Gastrocnemius medialis (tissue), 4 donors: ENCODE measurements at regions of chr16 and their contacts with region 1.

Region 1: DNA sequence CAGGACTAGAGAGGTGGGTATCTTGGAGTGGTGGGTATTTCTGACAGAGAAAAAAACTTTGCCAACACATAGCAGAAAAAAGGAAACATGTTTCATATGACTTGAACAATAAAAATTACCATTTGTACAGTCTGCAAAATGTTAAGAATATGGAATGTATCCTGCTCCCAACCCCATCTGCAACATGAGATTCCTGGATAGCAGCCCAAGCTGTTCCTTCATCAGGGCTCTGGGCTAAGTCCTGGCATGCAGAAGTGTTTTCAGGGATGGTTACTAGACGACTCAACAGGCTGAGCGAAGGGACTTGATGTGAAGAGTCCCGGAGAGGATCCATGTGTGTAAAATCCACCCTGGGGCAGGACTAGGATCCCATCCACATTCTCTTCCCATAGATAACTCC is 121.0 kb upstream of the IRX3 start:
- DNase-seq: no peak
- ATAC-seq: no peak
- H3K4me3 ChIP-seq: no peak overlapping the region
- H3K27ac ChIP-seq: no peak overlapping the region
- H3K4me1 ChIP-seq: peaks cover 3 to 6% of the 10 kb centered on the region in 2 donors
- H3K27me3 ChIP-seq: no peaks in the 10 kb centered on the region
- CTCF ChIP-seq: no peak
- POLR2A ChIP-seq: no peak

Region 2: DNA sequence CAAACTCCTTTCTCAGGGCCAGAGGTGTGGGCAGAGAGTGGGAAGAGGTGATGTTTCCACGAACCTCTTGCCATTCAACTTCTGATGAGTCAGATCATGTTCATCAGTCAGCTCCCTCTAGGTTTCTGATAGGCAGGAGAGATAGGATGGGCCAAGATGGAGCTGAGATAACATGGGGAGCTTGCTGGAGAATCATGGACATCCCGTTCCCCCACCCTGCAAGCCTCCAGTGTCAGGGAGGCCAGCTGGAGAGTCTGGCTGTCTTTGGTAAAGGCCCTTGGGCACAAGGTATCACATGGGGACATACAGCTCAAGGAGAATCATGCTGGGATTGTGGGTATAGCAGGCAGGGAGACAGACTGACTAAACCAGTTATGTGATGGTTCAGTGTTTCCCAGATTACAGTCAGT is 15.0 kb after region 1 on chr16:
- in situ Hi-C with region 1: no loop called
- intact Hi-C with region 1: no loop called
- DNase-seq: no peak
- ATAC-seq: no peak
- H3K4me3 ChIP-seq: no peak overlapping the region
- H3K27ac ChIP-seq: no peak overlapping the region
- H3K4me1 ChIP-seq: no peaks in the 10 kb centered on the region
- H3K27me3 ChIP-seq: no peaks in the 10 kb centered on the region
- CTCF ChIP-seq: no peak
- POLR2A ChIP-seq: no peak

Region 3: DNA sequence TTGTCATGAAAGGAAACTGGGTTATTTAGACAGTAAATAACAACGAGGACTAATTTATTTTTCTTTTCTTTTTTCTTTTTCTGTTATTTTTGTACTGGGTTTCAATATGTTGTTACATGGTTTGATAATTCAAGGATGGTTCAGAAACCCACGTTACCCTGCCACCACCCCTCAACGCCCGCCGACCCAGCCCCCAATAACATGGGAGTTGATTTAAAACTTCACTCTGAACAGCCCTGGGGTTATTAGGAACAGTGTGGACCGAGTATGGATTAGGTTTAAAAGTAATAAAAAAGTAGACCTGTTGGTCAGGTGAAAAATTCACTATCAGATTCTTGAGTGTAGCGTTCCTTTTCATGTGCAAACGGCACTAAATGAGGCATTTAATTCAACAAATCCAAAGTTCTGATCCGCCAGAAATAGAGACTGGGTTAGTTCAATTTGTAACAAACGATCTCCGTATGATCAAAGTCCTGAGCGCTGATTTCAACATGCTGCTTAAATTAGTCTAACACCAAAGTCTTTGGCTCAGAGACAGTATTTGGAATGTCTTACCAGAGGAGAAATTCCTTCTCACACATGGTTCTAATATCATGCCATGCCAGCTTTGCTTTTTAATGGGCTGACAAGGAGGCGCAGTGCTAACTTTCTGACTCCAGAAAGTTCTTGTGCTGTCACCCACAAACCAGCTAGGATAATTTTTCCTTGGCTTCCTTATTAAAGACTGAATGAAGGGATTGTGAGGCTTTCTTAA is 52.1 kb after region 1 on chr16:
- in situ Hi-C with region 1: loop called in 1 of 4 experiments (anchors 10 kb)
- intact Hi-C with region 1: no loop called
- DNase-seq: no peak
- ATAC-seq: no peak
- H3K4me3 ChIP-seq: no peak overlapping the region
- H3K27ac ChIP-seq: no peak overlapping the region
- H3K4me1 ChIP-seq: peaks cover 0 to 3% of the 10 kb centered on the region in 2 donors
- H3K27me3 ChIP-seq: peaks cover 0 to 4% (median 3%) of the 10 kb centered on the region in 3 donors
- CTCF ChIP-seq: no peak
- POLR2A ChIP-seq: no peak